AG04450 (cell line): ENCODE measurements at regions of chr1 and their contacts with region 1.

Region 1: DNA sequence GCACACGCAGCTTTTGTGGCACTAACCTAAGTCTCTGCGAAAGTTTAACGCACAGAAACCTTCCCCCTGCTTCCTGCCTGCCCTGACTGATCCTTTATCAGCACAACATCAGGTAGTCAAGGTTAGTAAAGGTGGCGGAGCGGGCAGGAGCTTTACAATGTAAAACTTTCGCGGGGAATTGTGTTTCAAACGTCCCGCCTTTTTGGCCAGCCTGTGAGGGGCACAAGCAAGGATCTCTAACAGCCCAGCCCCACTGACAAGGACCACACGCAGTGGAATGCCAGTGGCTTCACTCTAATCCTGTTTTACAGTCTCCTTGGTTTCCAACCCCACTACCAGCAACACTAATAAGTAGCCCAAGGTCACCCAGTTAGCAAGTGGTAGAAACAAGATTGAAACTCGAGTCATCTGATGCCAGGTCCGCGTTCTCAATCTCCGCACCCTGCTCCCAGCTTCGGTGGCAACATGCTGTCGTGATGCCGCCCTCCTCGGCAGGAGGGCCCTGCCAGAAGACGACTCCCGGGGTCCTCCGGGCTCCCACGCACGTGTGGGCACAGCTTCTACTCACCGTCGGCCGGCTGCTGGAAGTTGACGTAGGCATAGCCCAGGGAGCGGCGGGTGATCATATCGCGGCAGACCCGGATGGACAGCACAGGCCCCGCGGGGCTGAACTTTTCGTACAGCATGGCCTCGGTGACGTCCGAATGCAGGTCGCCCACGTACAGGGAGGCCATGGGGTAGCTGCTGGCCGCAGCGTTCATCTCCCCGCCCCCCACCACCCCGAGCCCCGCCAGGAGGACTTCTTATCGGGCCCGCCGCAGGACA is 1.2 kb downstream of the PABPC4 start:
- DNase-seq: no peak
- H3K4me3 ChIP-seq: peak overlapping the region; percentile 83
- H3K27ac ChIP-seq: peak overlapping the region; percentile 61
- H3K27me3 ChIP-seq: no peaks in the 10 kb centered on the region
- CTCF ChIP-seq: no peak

Region 2: GRCh38 chr1:38873027-38873969 is 702.1 kb before region 1 on chr1 and contains the start of gene MYCBP:
- CTCF ChIA-PET with region 1: interaction called, 12 read pairs
- POLR2A ChIA-PET with region 1: no interaction called
- DNase-seq: peak; percentile 90
- H3K4me3 ChIP-seq: peak within 1 kb of the TSS; percentile 88
- H3K27ac ChIP-seq: peak within 1 kb of the TSS; percentile 21
- H3K27me3 ChIP-seq: no peaks in the 10 kb centered on the region
- CTCF ChIP-seq: peak; percentile 8; the same call in 1 of the 2 replicates
- polyA plus RNA-seq, gene MYCBP: 13.7 and 17.3 TPM in 2 replicates

Region 3: GRCh38 chr1:39317111-39317510 is 258.3 kb before region 1 on chr1:
- CTCF ChIA-PET with region 1: no interaction called
- POLR2A ChIA-PET with region 1: no interaction called
- DNase-seq: no peak
- H3K4me3 ChIP-seq: no peak overlapping the region
- H3K27ac ChIP-seq: no peak overlapping the region
- H3K27me3 ChIP-seq: no peaks in the 10 kb centered on the region
- CTCF ChIP-seq: no peak

Region 4: GRCh38 chr1:39738622-39739366 is 163.4 kb after region 1 on chr1 and contains the start of gene PPIE:
- CTCF ChIA-PET with region 1: interaction called, 11 read pairs
- POLR2A ChIA-PET with region 1: no interaction called
- DNase-seq: peak; percentile 59
- H3K4me3 ChIP-seq: peak within 1 kb of the TSS; percentile 98
- H3K27ac ChIP-seq: peak within 1 kb of the TSS; percentile 47
- H3K27me3 ChIP-seq: peaks cover 8% of the 10 kb centered on the region
- CTCF ChIP-seq: no peak
- polyA plus RNA-seq, gene PPIE: 68.0 and 72.5 TPM in 2 replicates

Region 5: DNA sequence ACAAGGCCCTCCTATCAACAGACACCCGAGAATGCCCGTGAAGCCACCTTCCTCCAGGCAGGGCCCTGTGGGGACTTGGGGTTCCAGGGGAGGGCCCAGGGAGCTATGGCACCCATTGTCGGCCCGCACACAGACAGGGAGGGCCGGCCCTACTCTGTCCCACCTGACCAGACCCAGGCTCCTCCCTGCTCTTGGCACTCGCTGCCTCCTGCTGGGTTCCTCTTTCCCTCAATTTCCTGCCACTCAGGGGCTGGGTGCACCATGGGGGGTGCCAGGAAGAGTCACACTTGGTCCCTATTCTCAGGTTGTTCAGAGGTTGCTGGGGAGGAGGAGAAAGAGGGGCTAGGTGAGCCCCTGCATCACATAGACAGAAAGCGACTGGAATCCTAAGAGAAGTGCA is 203.7 kb after region 1 on chr1:
- CTCF ChIA-PET with region 1: no interaction called
- POLR2A ChIA-PET with region 1: no interaction called
- DNase-seq: no peak
- H3K4me3 ChIP-seq: no peak overlapping the region
- H3K27ac ChIP-seq: no peak overlapping the region
- H3K27me3 ChIP-seq: peaks cover 27% of the 10 kb centered on the region
- CTCF ChIP-seq: no peak

Region 6: DNA sequence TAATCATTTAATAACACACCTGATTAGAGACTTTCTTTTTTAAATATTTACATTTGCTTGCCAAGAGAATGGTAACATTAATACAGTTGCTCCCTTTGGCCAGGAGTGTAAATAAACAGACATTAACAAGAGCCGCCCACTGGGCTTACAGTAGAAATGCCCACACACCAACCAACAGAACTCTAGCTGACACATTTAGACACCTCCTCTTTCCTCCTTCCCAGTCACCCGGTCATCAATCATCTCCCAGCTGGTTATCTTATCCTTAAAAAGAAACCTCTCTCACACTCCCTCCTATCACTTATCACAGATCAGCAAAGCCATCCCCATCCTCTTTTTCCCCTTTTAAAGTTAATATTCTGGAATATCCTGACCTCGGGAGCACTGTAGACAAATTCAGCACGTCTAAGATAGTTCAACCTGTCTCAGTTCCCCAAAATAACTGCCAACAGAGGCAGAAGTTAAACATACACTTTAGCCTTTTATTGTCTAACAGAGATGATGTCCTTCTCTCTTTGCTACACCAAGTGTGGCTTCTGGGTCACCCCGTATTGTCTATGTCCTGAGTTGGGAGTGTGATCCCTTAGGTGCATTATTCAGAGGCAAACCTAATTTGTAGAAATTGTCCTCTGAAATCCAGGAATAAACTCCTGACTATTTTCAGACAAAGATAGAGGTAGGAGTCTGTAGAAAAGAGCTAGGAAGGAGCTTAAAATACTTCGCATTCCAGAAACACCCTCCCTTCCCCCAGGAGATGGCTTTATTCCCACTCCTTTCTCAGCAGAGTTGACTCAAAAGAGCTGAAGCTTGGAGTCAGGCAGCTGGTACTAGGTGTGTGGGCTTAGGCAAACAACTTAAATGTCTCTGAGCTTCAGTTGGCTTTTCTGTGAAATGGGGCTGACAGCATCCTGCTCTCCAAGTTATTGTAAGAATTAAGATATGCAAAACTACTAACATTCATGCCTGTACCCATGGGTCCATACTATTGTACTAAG is 317.5 kb after region 1 on chr1:
- CTCF ChIA-PET with region 1: no interaction called
- POLR2A ChIA-PET with region 1: no interaction called
- DNase-seq: peak; percentile 48
- H3K4me3 ChIP-seq: no peak overlapping the region
- H3K27ac ChIP-seq: peak overlapping the region; percentile 13
- H3K27me3 ChIP-seq: no peaks in the 10 kb centered on the region
- CTCF ChIP-seq: no peak